Activated T-helper 2 cell treated with anti-CD3 and anti-CD28 coated beads, Interferon-gamma antibody, Interleukin-2, Interleukin-4, amounts not matched to agents 10 μg/mL and 5 μg/mL and 100 μg/mL, durations not matched to agents 14 hours and 24 hours and 36 hours (primary cell): ENCODE measurements at regions of chr9 and their contacts with region 1.

Region 1: GRCh38 chr9:133478851-133479711 is at the start of gene SLC2A6:
- DNase-seq: peak; percentile 79
- H3K4me3 Mint-ChIP-seq: peak within 1 kb of the TSS; percentile 72
- H3K27ac Mint-ChIP-seq: no peak within 1 kb of the TSS
- H3K4me1 Mint-ChIP-seq: peaks cover 11% of the 10 kb centered on the region
- H3K27me3 Mint-ChIP-seq: peaks cover 8% of the 10 kb centered on the region
- total RNA-seq, gene SLC2A6: 6.1 and 6.5 TPM in 2 replicates

Region 2: DNA sequence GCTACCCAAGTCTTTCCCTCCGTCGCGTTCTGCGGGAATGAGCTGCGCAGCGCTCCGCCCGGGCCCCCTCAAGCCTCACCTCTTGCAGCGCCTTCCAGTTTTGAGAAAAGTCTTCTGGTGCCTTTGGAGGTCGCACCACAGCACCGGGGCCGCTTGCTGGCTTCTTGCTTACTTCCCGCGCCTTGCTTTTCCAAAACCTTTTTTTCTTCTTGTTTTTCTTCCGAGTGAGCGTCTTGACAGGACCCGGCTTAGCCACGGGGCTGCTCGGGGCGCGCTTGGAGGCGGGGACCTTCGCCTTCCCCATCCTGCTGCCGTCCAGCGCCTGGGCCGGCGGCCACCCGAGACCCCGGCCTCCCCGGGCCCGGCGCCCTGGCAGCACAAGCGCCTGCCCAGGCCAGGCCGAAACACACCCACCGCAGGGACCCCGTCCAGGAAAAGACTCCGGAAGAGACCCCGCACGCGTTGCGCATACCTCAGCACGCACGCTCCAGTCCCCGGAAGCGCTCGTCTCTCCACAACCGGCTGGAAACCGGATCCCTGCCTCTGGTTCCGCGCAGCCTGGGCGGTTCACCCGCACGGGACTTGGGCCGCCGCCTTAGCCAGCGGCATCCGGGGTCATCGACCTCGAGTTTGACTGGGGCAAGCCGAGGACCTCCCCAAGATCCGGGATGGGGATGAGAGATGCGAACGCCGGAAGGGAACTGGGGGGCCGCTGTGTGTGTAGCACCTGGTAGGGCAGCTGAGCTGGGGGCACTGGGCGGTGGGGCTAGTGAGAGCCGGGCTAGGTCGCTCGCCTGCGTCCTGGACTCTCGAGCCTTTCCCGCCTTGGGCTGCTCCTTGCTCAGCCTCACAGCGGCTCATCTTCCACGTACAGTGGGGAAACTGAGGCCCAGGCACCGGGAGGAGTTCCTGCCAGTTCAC is 61.3 kb before region 1 on chr9 and contains the start of gene REXO4:
- intact Hi-C with region 1: loop called (anchors 2 kb)
- DNase-seq: peak; percentile 84
- H3K4me3 Mint-ChIP-seq: peak within 1 kb of the TSS; percentile 93
- H3K27ac Mint-ChIP-seq: peak within 1 kb of the TSS; percentile 88
- H3K4me1 Mint-ChIP-seq: peaks cover 44% of the 10 kb centered on the region
- H3K27me3 Mint-ChIP-seq: no peaks in the 10 kb centered on the region
- total RNA-seq, gene REXO4: 31.7 and 32.8 TPM in 2 replicates

Region 3: DNA sequence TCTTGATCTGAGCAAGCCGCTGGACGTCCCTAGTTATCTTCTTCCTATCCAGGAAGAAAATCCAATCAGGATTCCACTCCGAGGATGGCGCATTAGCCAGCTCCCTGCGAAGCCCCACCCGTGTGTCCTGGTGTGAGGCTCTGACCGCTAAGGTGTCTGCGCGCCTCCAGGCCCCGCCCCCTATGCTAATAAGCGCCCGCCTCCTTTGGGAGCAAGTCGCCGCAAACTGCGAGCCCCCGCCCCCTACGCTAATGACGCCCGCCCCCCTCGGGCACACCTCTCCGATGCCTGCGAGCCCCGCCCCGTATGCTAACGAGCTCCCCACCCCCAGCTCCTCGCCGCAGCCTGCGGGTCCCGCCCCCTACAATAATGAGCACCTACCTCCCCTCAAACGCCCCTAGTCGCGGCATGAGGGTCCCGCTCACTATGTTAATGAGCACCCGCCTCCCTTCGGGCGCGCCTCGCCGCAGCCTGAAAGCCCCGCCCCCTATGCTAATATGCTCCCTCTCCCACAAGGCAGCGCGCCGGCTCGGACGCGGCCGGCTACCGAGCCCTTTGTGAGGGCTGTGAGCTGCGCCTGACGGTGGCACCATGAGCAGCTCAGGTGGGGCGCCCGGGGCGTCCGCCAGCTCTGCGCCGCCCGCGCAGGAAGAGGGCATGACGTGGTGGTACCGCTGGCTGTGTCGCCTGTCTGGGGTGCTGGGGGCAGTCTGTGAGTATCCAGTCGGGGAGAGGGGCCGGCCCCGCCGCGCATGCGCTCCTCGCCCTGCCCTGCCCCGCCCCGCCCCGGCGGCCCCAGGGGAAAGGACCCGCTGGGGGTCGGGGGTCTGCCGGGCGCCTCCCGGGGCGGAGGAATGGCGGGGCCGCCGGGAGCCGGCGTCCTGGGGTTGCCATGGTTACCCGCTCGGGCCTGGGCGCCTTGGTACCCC is 19.3 kb before region 1 on chr9 and contains the start of gene CACFD1:
- intact Hi-C with region 1: loop called (anchors 2 kb)
- DNase-seq: peak; percentile 84
- H3K4me3 Mint-ChIP-seq: peak within 1 kb of the TSS; percentile 88
- H3K27ac Mint-ChIP-seq: peak within 1 kb of the TSS; percentile 76
- H3K4me1 Mint-ChIP-seq: peaks cover 3% of the 10 kb centered on the region
- H3K27me3 Mint-ChIP-seq: peaks cover 6% of the 10 kb centered on the region
- total RNA-seq, gene CACFD1: 0.46 TPM in 2 replicates